ENCODE measurements at regions of chr20 and their contacts with region 1.

Region 1: DNA sequence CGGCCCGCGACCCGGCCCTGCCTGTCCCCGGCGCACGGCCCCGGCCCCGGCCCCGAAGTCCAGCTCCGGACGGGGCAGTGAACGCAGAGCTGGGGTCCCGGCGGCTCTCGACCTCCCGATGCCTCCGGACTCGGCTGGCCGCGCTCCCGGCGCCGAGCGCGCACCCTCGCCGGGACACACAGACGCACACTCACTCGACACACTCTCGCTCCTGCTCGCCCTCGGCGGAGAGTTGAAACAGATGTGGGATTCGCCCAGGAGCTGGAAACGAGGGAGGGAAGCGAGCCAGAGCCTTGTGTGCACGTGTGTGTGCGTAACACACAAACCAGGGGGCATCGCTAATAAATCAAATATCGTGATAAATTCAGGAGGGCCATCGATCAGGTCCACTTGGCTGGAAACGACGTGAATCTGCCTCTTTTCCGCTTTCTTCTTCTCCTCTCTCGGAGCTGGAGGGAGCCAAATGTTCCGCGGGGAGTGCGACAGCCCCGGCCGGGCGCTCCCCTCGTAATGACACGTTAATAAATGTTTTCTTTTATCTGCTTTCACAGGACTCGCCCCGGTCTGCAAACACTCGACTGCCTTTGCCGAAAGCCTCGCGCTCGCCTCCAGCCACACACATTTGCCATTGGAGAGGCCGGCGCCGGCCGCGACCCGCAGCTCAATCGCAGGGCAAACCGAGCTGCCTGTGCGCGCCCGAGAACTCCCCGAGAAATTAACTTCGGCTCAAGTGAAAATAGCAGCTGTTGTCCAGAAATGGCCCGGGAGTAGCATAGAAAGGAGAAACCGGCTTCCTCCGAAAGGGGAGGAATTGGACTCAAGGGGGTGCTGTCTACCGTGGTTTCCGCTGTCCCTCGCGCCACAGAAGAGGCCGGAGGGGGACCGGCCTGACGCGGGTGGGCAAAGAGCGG is 828 bp upstream of the SULF2 start:
- DNase-seq: peak; percentile 71
- CTCF ChIP-seq: peak; percentile 65

Region 2: DNA sequence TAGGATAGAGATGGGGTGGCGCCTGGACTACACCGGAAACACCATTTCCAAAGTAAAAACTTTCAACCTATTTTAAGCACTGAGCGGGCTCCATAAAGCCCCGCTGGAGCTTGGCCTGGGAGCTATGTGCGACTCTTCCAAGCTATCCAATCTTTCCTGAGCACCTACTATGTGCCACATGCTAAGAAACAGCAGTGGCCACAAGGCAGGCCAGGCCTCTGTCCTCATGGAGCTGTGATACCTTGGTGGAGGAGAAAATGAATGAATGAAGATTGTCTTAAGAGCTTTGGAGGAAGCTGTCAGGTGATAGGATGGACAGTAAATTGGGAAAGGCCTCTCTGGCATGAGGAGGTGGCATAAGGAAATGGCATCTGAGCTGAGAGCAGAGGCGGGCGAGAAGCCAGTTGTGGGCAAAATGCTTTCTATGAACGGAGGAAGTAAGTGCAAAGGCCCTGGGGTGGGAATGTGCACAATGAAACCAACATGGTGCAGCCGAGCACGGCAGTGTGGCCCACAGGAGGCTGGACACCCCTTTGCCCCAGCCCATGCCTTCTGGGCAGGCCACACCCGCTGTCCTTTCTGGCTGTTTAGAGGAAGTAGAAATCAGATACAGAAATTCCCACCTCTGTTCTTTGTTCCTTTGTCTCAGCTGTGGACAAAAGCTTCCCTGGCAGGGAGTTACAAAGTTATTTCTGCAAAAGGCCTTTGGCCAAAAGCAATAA is 13.0 kb before region 1 on chr20:
- CTCF ChIA-PET with region 1: interaction called, 20 read pairs
- POLR2A ChIA-PET with region 1: no interaction called
- DNase-seq: no peak
- CTCF ChIP-seq: no peak

Region 3: DNA sequence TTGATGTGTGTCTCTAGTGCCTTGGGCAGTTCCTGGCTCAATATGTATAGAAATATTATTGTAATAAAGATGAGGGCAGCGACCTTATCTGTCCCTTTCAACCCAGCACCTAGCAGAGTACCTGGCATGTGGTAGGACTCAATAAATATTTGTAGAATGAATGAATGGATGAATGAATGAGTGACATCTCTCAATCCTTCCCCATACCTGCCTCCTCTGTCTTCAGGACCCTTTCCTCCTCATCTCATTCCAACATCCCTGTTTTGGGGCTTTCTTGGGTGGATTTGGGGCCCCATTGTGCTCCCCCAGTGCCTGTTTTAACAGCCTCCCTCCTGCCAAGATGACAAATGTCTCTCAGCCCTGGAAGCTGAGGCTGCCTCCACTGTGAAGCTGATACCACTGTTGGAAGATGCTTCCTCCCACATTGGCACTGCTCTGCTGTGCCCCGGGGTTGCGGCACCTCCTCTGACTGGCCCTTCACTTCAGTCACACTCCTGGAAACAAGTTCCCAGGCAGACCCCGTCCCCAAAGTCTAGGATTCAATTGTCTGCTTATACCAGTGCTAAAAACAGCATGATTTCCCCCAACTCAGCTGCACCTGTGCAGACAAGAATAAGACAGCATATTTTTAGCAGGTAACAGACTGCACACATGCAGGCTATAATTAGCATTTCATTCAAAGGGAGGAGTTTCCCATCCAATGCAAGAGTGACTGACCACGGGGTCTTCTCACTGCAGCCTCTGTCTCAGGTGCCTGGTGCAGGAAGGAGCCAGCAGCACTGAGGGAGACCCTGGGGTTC is 30.4 kb after region 1 on chr20:
- CTCF ChIA-PET with region 1: no interaction called
- POLR2A ChIA-PET with region 1: no interaction called
- DNase-seq: no peak
- CTCF ChIP-seq: no peak

Region 4: GRCh38 chr20:47847868-47848531 is 61.9 kb after region 1 on chr20:
- CTCF ChIA-PET with region 1: no interaction called
- POLR2A ChIA-PET with region 1: no interaction called
- DNase-seq: no peak
- CTCF ChIP-seq: no peak

Region 5: GRCh38 chr20:47985092-47985850 is 199.2 kb after region 1 on chr20:
- CTCF ChIA-PET with region 1: no interaction called
- POLR2A ChIA-PET with region 1: no interaction called
- DNase-seq: no peak
- CTCF ChIP-seq: no peak

Measured in GM10248 (cell line).